HEK293 (cell line): ENCODE measurements at regions of chr1 and their contacts with region 1.

Region 1: DNA sequence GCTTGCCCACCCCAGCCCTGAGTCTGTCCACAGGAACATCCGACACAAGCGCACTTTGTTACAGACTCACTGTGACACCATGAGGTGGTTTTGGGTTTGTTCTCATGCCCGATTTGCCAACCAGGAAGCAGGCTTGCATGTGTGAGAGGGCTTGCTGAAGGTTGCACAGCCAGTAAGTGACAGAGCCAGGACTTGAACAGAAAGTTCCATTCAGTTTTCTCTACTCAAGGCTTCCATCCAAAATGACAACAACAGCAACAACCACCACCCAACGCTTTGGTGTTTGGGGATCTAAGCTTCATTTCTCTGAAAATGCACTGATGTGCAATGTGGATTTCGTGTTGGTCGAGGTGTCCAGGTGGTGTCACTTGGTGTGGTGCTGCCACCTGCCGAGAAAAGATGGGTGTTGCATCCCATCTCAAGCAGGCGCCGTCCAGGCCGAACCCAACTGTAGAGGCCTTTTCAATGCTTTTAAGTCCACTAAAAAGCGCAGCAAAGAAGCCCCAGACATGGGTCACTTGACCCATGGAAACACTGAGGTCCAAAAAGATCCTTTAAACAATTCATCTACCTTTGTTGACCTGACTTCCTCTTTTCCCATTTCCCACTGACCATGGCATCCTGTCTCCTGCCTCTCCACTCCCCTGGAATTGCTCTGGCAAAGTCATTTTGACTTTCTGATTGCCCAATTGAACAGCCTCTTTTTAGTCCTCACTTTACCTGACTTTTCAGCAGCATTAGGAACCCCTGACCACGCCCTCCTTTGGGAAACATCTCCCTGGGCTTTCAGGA is 12.2 kb downstream of the CITED4 start:
- H3K4me3 ChIP-seq: no peak overlapping the region
- H3K27ac ChIP-seq: no peak overlapping the region
- H3K4me1 ChIP-seq: no peaks in the 10 kb centered on the region
- CTCF ChIP-seq: peak; percentile 89

Region 2: DNA sequence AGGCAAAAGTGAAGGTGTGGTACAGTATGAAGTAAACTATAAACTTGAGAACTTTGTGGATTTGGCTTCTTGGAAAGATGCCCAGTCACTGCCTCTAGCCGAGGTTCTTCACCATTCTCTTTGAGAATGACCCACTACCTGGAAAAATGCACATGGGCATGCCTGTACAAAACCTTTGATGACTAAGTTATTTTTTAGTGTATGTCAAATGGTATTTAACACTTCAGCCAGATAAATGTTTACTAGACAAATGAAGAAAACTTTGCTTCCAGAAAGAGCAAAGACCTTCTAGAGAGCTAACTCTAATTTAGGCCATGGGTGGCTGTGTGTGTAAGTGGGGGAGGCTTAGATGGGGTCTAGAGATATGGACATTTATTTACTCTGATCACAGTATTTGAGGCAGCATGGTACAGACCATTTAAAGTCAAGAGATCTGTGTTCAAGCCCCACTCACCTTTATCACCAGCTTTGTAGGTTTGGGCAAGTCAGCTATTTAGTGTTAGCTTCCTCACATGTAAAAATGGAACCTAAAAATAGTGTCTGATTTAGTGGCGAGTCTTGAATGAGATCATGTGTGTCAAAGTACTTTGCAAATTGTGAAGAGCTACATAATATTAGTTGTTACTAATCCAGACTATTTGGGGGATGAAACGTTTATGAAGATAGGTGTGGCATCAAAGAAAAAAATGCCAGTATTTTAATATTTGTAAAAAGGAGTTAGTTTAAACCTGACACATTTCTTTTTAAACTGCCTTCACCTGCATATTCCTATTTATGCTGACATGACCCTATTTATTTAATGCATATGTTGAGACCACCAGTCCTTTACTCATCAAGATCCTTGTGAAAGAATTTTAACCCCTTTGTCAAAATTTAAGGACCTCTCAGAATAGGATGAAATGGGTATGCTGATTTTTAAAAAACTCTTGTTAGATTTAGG is 138.3 kb before region 1 on chr1:
- CTCF ChIA-PET with region 1: no interaction called
- POLR2A ChIA-PET with region 1: no interaction called
- H3K4me3 ChIP-seq: no peak overlapping the region
- H3K27ac ChIP-seq: peak overlapping the region; percentile 27
- H3K4me1 ChIP-seq: peaks cover 12% of the 10 kb centered on the region
- CTCF ChIP-seq: no peak

Region 3: DNA sequence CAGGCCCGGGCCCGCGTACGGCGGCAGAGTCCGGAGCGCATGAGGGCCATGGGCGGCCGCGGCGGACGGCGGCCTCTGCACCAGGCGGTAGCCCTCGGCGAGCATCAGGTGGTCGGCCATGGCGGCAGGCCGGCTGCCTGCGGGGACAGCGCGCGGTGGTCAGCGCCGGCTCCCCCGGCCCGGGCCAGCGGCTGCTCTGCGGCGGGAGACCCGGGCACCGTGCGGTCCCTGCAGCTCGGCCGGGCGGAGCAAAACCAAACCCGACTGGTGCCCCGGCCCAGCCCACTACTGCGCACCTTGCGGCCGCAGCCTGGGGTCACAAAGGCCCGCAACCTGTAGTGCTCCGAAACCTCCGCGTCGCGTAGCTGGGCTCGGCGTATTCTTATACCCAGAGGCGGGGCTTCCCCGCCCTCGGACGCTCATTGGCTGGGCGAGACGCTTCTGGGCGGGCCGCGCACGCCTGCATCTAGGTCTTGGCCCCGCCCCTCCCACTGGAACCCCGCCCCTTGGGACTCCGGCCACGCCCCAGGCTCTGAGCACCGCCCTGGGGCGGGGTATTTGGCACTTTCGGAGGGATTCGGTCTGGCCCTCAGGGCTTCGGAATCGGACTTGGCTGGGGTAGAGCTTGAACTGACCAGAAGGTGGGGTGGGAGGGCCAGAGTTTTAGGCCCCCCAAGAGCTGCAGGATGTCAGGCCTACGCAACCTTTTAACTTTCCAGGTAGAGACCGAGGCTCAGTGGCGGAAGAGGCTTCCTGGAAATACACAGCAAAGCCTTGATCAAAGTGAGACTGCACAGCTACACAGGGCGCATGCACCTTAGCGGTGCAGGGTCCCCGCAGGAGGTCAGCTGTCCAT is 12.2 kb after region 1 on chr1 and contains the start of gene CITED4:
- CTCF ChIA-PET with region 1: interaction called, 11 read pairs
- POLR2A ChIA-PET with region 1: no interaction called
- H3K4me3 ChIP-seq: peak within 1 kb of the TSS; percentile 41
- H3K27ac ChIP-seq: no peak within 1 kb of the TSS
- H3K4me1 ChIP-seq: no peaks in the 10 kb centered on the region
- CTCF ChIP-seq: peak; percentile 18; the same call in 1 of the 2 replicates